ENCODE measurements at regions of chr17 and their contacts with region 1.

Region 1: DNA sequence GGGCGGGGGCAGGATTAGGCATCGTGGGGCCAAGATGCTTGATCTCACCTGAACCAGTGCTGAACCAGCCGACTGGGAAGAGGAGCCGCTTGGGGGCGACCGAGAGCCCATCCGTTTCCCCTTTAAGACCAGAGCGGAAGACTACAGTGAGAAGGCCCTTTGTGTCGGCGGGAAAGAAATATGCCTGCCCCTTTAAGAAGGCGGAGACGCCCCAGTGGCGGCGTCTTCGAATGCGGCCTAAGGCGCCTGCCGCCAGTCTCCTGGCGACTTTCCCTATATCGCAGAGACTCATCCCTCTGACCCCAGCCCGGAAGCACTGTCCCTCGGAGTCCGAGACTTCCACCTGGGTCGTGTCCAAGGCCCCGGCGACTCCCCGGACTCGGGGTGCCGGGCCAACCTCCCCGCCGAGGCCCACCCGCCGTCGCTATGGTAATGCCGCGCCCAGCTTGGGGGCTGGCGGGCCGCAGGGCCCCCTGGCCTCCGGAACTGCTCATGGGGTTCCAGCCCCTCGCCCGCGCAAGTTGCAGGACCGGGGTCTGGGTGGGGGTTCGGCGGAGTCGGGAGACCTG is at the start of gene HROB:
- DNase-seq: peak; percentile 100
- H3K4me3 Mint-ChIP-seq: peak within 1 kb of the TSS; percentile 93
- H3K27ac Mint-ChIP-seq: peak within 1 kb of the TSS; percentile 94
- H3K4me1 Mint-ChIP-seq: peaks cover 24% of the 10 kb centered on the region
- H3K27me3 Mint-ChIP-seq: no peaks in the 10 kb centered on the region
- total RNA-seq, gene HROB: 23.8 and 24.5 TPM in 2 replicates

Region 2: DNA sequence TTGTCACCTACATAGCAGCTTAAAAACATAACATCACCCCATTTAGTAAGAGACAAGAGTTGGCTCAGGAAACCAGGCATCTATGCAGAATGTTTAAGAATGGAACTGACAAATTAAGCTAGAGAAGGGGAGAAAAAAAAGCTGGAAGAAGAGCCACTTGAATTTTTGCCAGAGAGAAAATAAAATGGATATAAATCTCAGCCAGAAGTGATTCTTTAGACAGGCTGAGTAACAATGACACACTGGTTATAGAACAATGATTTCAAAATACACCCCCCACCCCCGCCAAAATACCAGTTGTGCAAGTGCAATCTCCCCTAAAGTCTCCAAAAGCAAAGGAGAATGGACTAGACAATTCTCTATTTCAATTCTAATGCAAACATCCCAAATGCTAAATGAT is 97.7 kb before region 1 on chr17:
- intact Hi-C with region 1: no loop called
- DNase-seq: no peak
- H3K4me3 Mint-ChIP-seq: no peak overlapping the region
- H3K27ac Mint-ChIP-seq: no peak overlapping the region
- H3K4me1 Mint-ChIP-seq: peaks cover 23% of the 10 kb centered on the region
- H3K27me3 Mint-ChIP-seq: no peaks in the 10 kb centered on the region

Region 3: DNA sequence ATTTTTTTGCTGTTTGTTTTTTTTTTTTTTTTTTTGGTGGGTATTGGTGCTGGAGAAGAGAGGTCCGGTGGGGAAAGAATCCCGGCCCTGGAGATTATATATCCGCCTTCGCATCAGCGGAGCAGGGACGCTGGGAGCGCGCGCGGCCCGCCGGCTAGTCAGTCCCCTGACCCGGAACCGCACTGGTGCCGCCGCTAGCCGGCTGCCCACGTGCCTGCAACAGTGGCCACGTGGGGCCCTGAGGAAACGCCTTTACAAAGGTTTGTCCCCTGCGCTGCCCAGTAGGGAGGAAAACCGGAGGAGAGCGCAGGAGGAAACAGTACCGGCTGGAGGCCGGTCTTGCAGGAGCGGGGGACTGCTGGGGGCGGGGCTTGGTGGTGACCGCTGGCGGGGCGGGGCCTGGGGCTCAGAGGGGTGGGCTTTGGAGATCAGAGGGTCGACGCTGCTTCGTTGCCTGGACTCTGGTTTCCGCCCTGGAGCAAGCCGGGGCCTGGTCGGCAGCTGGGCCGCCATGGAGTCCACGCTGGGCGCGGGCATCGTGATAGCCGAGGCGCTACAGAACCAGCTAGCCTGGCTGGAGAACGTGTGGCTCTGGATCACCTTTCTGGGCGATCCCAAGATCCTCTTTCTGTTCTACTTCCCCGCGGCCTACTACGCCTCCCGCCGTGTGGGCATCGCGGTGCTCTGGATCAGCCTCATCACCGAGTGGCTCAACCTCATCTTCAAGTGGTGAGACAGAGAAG is 71.2 kb before region 1 on chr17 and contains the start of gene G6PC3:
- intact Hi-C with region 1: loop called (anchors 2 kb)
- DNase-seq: peak; percentile 94
- H3K4me3 Mint-ChIP-seq: peak within 1 kb of the TSS; percentile 95
- H3K27ac Mint-ChIP-seq: peak within 1 kb of the TSS; percentile 96
- H3K4me1 Mint-ChIP-seq: peaks cover 26% of the 10 kb centered on the region
- H3K27me3 Mint-ChIP-seq: no peaks in the 10 kb centered on the region
- total RNA-seq, gene G6PC3: 33.3 and 34.1 TPM in 2 replicates

Region 4: GRCh38 chr17:44086364-44087311 is 55.2 kb before region 1 on chr17:
- intact Hi-C with region 1: loop called (anchors 2 kb)
- DNase-seq: peak; percentile 70
- H3K4me3 Mint-ChIP-seq: peak overlapping the region; percentile 44
- H3K27ac Mint-ChIP-seq: peak overlapping the region; percentile 75
- H3K4me1 Mint-ChIP-seq: peaks cover 14% of the 10 kb centered on the region
- H3K27me3 Mint-ChIP-seq: no peaks in the 10 kb centered on the region

Region 5: DNA sequence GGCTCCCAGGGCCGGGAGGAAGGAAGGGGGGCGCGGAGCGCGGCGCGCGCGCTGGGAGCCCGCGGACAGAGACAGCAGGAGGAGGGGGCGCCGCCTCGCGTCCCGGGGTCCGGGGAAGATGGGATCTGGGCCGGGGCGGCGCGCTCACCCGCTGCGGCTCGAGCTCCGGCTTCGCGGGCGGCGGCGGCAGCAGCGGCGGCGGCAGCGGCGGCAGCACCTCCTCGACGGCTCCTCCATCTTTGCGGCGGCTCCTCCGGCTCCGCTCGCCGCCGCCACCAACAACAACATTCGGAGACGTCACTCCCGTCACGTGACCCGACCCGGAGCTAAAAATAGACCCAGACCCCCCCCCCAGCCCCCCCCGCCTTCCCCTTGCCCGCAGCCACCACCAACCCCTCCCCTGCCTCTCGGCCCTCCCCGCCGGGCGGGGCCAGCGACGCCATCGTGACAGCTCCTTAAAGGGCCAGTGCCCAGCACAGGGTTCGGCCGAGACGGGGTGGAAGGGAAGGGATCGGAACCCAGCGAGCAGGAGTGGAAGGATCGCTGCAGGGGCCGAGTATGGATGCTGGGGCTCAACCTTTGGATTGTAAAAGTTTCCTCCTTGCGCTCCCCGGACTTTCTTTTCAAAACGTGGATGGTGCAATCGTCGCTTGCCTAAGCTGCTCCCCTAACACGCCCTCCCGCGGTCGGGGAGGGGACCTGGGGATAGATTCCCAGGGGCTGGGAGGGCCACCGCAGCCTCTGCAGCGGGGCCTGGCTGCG is 18.3 kb before region 1 on chr17 and contains the start of gene HDAC5:
- intact Hi-C with region 1: loop called (anchors 1 kb)
- DNase-seq: peak; percentile 99
- H3K4me3 Mint-ChIP-seq: peak within 1 kb of the TSS; percentile 95
- H3K27ac Mint-ChIP-seq: peak within 1 kb of the TSS; percentile 97
- H3K4me1 Mint-ChIP-seq: peaks cover 24% of the 10 kb centered on the region
- H3K27me3 Mint-ChIP-seq: peaks cover 2% of the 10 kb centered on the region
- total RNA-seq, gene HDAC5: 16.1 and 17.7 TPM in 2 replicates

Region 6: GRCh38 chr17:44186307-44187130 is 44.7 kb after region 1 on chr17 and contains the start of gene TMUB2:
- intact Hi-C with region 1: loop called (anchors 1 kb)
- DNase-seq: peak; percentile 100
- H3K4me3 Mint-ChIP-seq: peak within 1 kb of the TSS; percentile 100
- H3K27ac Mint-ChIP-seq: peak within 1 kb of the TSS; percentile 99
- H3K4me1 Mint-ChIP-seq: peaks cover 33% of the 10 kb centered on the region
- H3K27me3 Mint-ChIP-seq: no peaks in the 10 kb centered on the region
- total RNA-seq, gene TMUB2: 16.1 and 19.0 TPM in 2 replicates

Region 7: GRCh38 chr17:44218344-44219107 is 76.7 kb after region 1 on chr17:
- intact Hi-C with region 1: loop called (anchors 2 kb)
- DNase-seq: peak; percentile 96
- H3K4me3 Mint-ChIP-seq: peak overlapping the region; percentile 97
- H3K27ac Mint-ChIP-seq: peak overlapping the region; percentile 97
- H3K4me1 Mint-ChIP-seq: peaks cover 52% of the 10 kb centered on the region
- H3K27me3 Mint-ChIP-seq: peaks cover 2% of the 10 kb centered on the region

Region 8: DNA sequence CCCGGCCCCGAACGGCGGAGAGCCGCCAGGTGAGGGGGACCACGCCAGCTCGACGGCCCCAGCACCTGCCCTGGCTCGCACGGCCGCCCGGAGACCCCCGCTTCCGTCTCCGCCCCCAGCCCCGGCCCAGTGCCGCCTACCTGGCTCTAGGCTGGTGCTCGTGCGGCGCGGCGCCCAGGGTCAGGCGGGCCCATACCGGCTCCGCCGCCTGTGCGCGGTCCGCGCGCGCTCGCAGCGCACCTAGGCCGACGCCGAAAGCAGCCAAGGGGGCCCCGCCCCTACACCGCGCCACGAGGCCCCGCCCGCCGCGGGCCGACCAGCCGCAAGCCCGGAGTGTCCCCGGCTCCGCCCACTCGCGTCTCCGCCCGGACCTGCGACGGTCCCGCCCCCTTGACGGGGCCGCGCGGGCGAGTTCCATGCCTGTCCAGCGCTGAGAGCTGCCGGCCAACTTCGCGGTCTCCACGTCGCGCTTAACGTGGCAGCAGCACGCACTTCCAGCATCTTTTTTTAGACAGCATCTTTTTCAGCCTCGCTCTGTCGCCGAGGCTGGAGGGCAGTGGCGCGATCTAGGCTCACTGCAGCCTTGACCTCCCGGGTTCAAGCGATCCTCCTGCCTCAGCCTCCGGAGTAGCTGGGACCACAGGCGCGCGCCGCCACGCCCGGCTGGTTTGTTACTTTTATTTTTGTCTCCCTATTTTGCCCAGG is 182.9 kb after region 1 on chr17 and contains the start of gene SLC25A39:
- intact Hi-C with region 1: loop called (anchors 5 kb)
- DNase-seq: peak; percentile 99
- H3K4me3 Mint-ChIP-seq: peak within 1 kb of the TSS; percentile 94
- H3K27ac Mint-ChIP-seq: peak within 1 kb of the TSS; percentile 96
- H3K4me1 Mint-ChIP-seq: peaks cover 20% of the 10 kb centered on the region
- H3K27me3 Mint-ChIP-seq: no peaks in the 10 kb centered on the region
- total RNA-seq, gene SLC25A39: 172 TPM in 2 replicates